ENCODE measurements at regions of chr14 and their contacts with region 1.

Region 1: DNA sequence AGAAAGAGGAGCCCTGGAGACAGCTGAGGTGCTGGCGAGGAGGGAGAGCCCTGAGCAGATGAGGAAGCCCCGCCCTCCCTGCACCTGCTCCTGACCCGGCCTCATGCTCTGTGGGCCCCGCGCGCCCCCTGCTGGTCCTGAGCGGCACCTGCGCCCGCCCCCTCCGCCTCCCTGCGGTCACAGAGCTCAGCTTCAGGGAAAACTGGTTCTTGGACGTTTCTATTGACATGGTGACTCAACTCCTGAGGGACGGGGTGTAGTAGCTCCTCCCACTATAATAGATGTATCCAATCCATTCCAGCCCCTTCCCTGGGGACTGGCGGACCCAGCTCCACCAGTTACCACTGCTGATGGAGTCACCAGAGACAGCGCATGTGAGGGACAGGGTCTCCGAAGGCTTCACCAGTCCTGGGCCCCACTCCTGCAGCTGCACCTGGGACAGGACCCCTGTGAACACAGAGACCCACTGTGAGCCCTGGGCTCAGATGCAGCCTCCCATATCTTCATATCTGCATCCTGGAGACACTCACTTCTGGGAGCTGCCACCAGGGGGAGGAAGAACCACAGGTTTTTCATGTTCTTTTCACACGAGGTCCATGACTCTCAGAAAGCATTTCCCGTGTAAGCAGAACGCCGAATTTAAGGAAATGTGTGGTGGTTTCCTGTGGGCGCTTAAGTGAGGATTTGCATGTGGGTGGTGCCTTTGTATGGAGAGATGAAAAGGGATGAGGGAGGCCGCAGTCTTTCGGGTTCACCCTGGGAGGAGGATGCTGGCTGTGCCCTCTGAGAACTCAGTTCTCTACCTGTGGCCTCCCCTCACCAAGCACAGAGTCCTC is 1346.4 kb downstream of the TMEM121 start:
- DNase-seq: peak; percentile 79
- H3K4me3 Mint-ChIP-seq: peak overlapping the region; percentile 10
- H3K27ac Mint-ChIP-seq: no peak overlapping the region
- H3K4me1 Mint-ChIP-seq: peaks cover 30% of the 10 kb centered on the region
- H3K27me3 Mint-ChIP-seq: peaks cover 45% of the 10 kb centered on the region

Region 2: GRCh38 chr14:106605548-106606448 is 267.0 kb before region 1 on chr14:
- CTCF ChIA-PET with region 1: no interaction called
- POLR2A ChIA-PET with region 1: no interaction called
- DNase-seq: peak; percentile 82
- H3K4me3 Mint-ChIP-seq: no peak overlapping the region
- H3K27ac Mint-ChIP-seq: no peak overlapping the region
- H3K4me1 Mint-ChIP-seq: peaks cover 9% of the 10 kb centered on the region
- H3K27me3 Mint-ChIP-seq: peaks cover 56% of the 10 kb centered on the region

Region 3: GRCh38 chr14:106776395-106776983 is 96.3 kb before region 1 on chr14:
- CTCF ChIA-PET with region 1: no interaction called
- POLR2A ChIA-PET with region 1: no interaction called
- DNase-seq: no peak
- H3K4me3 Mint-ChIP-seq: no peak overlapping the region
- H3K27ac Mint-ChIP-seq: no peak overlapping the region
- H3K4me1 Mint-ChIP-seq: peaks cover 25% of the 10 kb centered on the region
- H3K27me3 Mint-ChIP-seq: no peaks in the 10 kb centered on the region

Region 4: GRCh38 chr14:106812788-106813476 is 59.9 kb before region 1 on chr14:
- CTCF ChIA-PET with region 1: no interaction called
- POLR2A ChIA-PET with region 1: no interaction called
- DNase-seq: no peak
- H3K4me3 Mint-ChIP-seq: no peak overlapping the region
- H3K27ac Mint-ChIP-seq: no peak overlapping the region
- H3K4me1 Mint-ChIP-seq: peaks cover 24% of the 10 kb centered on the region
- H3K27me3 Mint-ChIP-seq: peaks cover 31% of the 10 kb centered on the region

Region 5: DNA sequence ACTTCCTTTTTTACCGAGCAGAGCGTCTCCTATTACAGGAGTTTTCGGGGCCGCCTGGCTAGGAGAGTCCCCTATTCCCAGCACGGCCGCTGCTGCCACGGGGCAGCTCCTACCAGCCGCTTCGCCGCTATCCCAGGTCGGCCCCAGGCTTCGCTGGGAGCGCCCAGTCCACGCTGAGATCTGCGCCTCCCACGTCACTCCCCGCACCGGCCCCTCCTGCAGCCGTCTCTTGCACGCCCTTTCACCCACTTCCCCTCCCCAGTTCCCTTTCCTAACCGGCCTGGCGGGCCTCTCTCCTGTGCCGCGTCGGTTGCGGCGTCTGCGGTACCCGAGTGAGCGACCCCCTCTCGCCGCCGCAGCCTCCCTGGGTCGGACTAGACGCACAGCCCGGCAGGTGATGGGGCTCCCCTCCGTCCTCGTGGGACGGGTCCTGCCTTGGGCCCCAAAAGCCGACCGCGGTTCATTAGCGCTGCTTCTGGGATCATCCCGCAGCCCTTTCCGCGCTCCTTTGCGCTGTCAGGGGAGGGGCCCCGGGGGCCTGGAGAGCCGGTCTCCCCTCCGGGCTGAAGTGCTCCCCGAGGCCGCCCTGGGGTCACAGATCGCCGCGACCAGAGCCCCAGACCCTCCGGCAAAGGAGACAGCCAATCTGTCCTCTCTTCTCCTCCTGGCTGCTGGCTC is 28.1 kb before region 1 on chr14:
- CTCF ChIA-PET with region 1: interaction called, 13 read pairs
- POLR2A ChIA-PET with region 1: no interaction called
- DNase-seq: peak; percentile 68
- H3K4me3 Mint-ChIP-seq: peak overlapping the region; percentile 81
- H3K27ac Mint-ChIP-seq: peak overlapping the region; percentile 84
- H3K4me1 Mint-ChIP-seq: peaks cover 36% of the 10 kb centered on the region
- H3K27me3 Mint-ChIP-seq: peaks cover 7% of the 10 kb centered on the region

Region 6: GRCh38 chr14:106850913-106851825 is 21.7 kb before region 1 on chr14:
- CTCF ChIA-PET with region 1: interaction called, 13 read pairs
- POLR2A ChIA-PET with region 1: no interaction called
- DNase-seq: no peak
- H3K4me3 Mint-ChIP-seq: no peak overlapping the region
- H3K27ac Mint-ChIP-seq: no peak overlapping the region
- H3K4me1 Mint-ChIP-seq: peaks cover 11% of the 10 kb centered on the region
- H3K27me3 Mint-ChIP-seq: peaks cover 27% of the 10 kb centered on the region

Measured in activated CD4-positive, alpha-beta T cell treated with anti-CD3 and anti-CD28 coated beads, Interleukin-2, amount 10 ng/mL, durations not matched to agents 7 days and 5 days (primary cell).